OCI-LY7 (cell line): ENCODE measurements at regions of chr17 and their contacts with region 1.

Region 1: GRCh38 chr17:7989781-7990655 is 12.4 kb upstream of the GUCY2D start:
- DNase-seq: peak; percentile 90
- H3K4me3 ChIP-seq: peak overlapping the region; percentile 68
- H3K27ac ChIP-seq: peak overlapping the region; percentile 55
- H3K4me1 ChIP-seq: peaks cover 13% of the 10 kb centered on the region
- CTCF ChIP-seq: peak; percentile 89

Region 2: GRCh38 chr17:7740481-7741001 is 249.5 kb before region 1 on chr17:
- CTCF ChIA-PET with region 1: interaction called, 7 read pairs
- POLR2A ChIA-PET with region 1: no interaction called
- intact Hi-C with region 1: loop called (anchors 5 kb)
- DNase-seq: no peak
- H3K4me3 ChIP-seq: no peak overlapping the region
- H3K27ac ChIP-seq: no peak overlapping the region
- H3K4me1 ChIP-seq: no peaks in the 10 kb centered on the region
- CTCF ChIP-seq: no peak

Region 3: GRCh38 chr17:7862692-7863437 is 127.2 kb before region 1 on chr17:
- CTCF ChIA-PET with region 1: interaction called, 3 read pairs
- POLR2A ChIA-PET with region 1: no interaction called
- intact Hi-C with region 1: loop called (anchors 2 kb)
- DNase-seq: peak; percentile 69
- H3K4me3 ChIP-seq: peak overlapping the region; percentile 6
- H3K27ac ChIP-seq: peak overlapping the region; percentile 27
- H3K4me1 ChIP-seq: peaks cover 49% of the 10 kb centered on the region
- CTCF ChIP-seq: peak; percentile 91

Region 4: GRCh38 chr17:7931709-7932482 is 58.1 kb before region 1 on chr17 and contains the starts of genes CNTROB and TRAPPC1:
- CTCF ChIA-PET with region 1: no interaction called
- POLR2A ChIA-PET with region 1: interaction called, 16 read pairs
- intact Hi-C with region 1: no loop called
- DNase-seq: peak; percentile 99
- H3K4me3 ChIP-seq: peak within 1 kb of the TSS; percentile 99
- H3K27ac ChIP-seq: peak within 1 kb of the TSS; percentile 69
- H3K4me1 ChIP-seq: peaks cover 27% of the 10 kb centered on the region
- CTCF ChIP-seq: no peak
- total RNA-seq, gene CNTROB: 49.1 and 55.4 TPM in 2 replicates
- total RNA-seq, gene TRAPPC1: 40.2 and 41.0 TPM in 2 replicates

Region 5: GRCh38 chr17:8057691-8058114 is 67.7 kb after region 1 on chr17:
- CTCF ChIA-PET with region 1: no interaction called
- POLR2A ChIA-PET with region 1: interaction called, 3 read pairs
- intact Hi-C with region 1: loop called (anchors 1 kb)
- DNase-seq: peak; percentile 90
- H3K4me3 ChIP-seq: no peak overlapping the region
- H3K27ac ChIP-seq: no peak overlapping the region
- H3K4me1 ChIP-seq: peaks cover 27% of the 10 kb centered on the region
- CTCF ChIP-seq: peak; percentile 85